ENCODE measurements at regions of chr17 and their contacts with region 1.

Region 1: GRCh38 chr17:56715613-56716357 is 117.9 kb downstream of the C17orf67 start:
- DNase-seq: peak; percentile 71
- H3K4me3 ChIP-seq: no peak overlapping the region
- H3K27ac ChIP-seq: no peak overlapping the region
- H3K4me1 ChIP-seq: peaks cover 15% of the 10 kb centered on the region
- H3K27me3 ChIP-seq: no peaks in the 10 kb centered on the region
- CTCF ChIP-seq: peak; percentile 60 to 77

Region 2: DNA sequence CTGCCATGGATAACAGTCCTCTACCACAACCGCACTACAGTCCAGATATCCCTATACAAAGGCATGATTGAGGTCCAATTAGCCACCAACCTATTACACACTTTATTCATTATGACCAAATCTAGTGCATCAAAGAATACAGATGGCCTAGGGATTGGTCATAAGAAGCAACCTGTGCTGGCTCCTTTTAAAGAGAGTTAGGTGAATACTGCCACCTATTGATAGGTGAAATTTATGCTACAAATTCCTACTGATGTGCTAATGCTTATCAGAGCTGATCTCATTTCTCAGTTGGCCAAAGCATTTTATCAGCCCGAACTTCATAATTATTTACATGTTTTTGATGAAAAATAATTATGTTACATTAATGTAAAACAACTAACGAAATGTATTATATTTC is 396.3 kb before region 1 on chr17:
- CTCF ChIA-PET with region 1: no interaction called
- dilution Hi-C with region 1: no loop called
- in situ Hi-C with region 1: no loop called
- intact Hi-C with region 1: loop called (anchors 5 kb)
- DNase-seq: peak; percentile 58
- H3K4me3 ChIP-seq: no peak overlapping the region
- H3K27ac ChIP-seq: no peak overlapping the region
- H3K4me1 ChIP-seq: no peaks in the 10 kb centered on the region
- H3K27me3 ChIP-seq: no peaks in the 10 kb centered on the region
- CTCF ChIP-seq: peak; percentile 48 to 76

Region 3: DNA sequence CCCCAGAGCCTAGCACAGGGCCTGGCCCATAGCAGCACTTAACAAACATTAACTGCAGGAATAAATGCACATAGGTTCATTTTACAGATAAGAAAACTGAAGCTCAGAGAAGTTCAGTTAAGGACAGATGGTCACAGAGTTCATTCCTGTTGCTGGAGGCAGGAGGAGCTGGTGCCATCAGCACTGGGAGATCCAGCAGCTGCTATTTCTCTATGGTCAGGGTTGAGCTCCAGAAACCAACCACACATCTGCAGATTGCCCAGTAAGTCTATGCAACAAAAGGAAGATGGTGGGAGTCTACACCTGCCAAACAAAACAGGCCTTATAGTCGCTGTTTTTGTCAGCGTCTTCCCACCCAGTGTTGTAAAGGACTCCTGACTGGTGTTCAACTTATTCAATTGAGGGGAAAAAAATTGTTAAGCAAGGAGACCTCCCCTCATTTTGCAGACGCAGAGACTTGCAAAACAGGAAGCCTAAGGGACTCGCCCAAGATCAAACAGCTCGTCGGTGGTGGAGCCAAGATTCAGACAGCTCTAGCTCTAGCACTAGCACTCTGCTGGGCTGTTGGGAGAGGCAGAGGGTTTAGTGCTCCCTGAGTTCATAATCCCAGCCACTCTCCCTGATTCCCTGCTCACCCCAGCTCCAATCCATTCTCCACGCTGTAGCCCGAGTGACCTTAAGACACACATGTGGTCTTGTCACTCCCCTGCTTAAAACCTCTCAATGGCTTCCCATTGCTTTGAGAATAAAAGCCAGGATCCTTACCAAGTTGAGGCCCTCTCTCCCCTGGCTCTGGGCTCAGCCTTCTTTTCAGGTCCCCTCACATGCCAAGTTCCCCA is 113.3 kb before region 1 on chr17:
- CTCF ChIA-PET with region 1: no interaction called
- dilution Hi-C with region 1: no loop called
- in situ Hi-C with region 1: loop called (anchors 10 kb)
- intact Hi-C with region 1: no loop called
- DNase-seq: no peak
- H3K4me3 ChIP-seq: no peak overlapping the region
- H3K27ac ChIP-seq: no peak overlapping the region
- H3K4me1 ChIP-seq: peaks cover 4% of the 10 kb centered on the region
- H3K27me3 ChIP-seq: no peaks in the 10 kb centered on the region
- CTCF ChIP-seq: no peak

Region 4: GRCh38 chr17:56679115-56679766 is 36.5 kb before region 1 on chr17:
- CTCF ChIA-PET with region 1: interaction called, 10 read pairs
- dilution Hi-C with region 1: no loop called
- in situ Hi-C with region 1: no loop called
- intact Hi-C with region 1: loop called (anchors 1 kb)
- DNase-seq: peak; percentile 34
- H3K4me3 ChIP-seq: no peak overlapping the region
- H3K27ac ChIP-seq: peak overlapping the region; percentile 89
- H3K4me1 ChIP-seq: peaks cover 74% of the 10 kb centered on the region
- H3K27me3 ChIP-seq: no peaks in the 10 kb centered on the region
- CTCF ChIP-seq: peak; percentile 54 to 64

Region 5: DNA sequence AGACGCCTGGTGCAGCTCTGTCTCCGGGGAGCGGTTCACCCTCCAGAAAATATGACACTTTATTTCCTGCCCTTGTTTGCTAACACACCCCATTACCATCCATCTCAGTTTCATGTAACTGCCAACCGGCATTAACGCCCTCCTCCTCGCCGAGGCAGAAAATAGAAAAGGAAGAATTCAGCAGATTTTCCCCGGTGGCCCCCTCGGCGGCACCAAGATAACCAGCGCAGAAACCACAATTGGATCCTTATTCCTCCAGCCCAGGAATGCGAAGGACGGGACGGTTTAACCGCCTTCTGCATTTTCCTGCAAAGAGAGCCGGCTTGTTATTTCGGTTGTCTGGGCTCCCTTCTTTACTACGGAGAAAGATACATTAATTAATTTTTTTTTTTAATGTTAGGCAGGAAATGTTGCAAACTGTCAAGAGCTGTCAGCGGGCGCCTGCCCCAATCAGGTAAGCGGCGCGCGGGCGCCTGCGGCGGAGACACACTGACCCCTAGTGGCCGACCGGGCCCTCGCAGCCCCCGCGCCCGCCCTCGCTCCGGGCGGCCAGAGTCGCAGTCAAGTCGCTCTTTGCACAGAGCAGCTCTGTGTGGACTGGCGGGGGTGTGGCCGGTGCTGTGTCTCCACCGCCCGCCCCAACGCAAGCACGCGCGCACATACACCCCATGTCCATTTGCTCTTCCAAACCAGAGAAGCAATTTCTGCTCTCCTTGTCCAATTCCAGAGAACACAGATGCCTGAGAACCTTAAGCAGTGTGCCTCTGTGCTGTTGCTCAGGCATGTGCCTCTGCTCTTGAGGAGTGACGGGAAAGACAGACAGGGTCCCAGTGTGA is 64.3 kb after region 1 on chr17:
- CTCF ChIA-PET with region 1: interaction called, 3 read pairs
- dilution Hi-C with region 1: loop called (anchors 5 kb)
- in situ Hi-C with region 1: no loop called
- intact Hi-C with region 1: loop called (anchors 1 kb)
- DNase-seq: peak; percentile 78
- H3K4me3 ChIP-seq: peak overlapping the region in 2 of 3 experiments; percentile 32 to 35
- H3K27ac ChIP-seq: no peak overlapping the region
- H3K4me1 ChIP-seq: peaks cover 20% of the 10 kb centered on the region
- H3K27me3 ChIP-seq: no peaks in the 10 kb centered on the region
- CTCF ChIP-seq: peak; percentile 78 to 96

Measured in mammary epithelial cell (primary cell).